CD4-positive, alpha-beta T cell (primary cell): ENCODE measurements at regions of chr15 and their contacts with region 1.

Region 1: GRCh38 chr15:88818920-88819319 is 15.7 kb downstream of the ACAN start:
- DNase-seq: no peak
- ATAC-seq: no peak
- H3K4me3 ChIP-seq: no peak overlapping the region
- H3K4me3 Mint-ChIP-seq: no peak overlapping the region
- H3K27ac ChIP-seq: no peak overlapping the region
- H3K27ac Mint-ChIP-seq: no peak overlapping the region
- H3K4me1 ChIP-seq: no peaks in the 10 kb centered on the region
- H3K4me1 Mint-ChIP-seq: no peaks in the 10 kb centered on the region
- H3K27me3 ChIP-seq: peaks cover 0 to 2% of the 10 kb centered on the region in 2 experiments
- H3K27me3 Mint-ChIP-seq: peaks cover 40% of the 10 kb centered on the region
- CTCF ChIP-seq: no peak

Region 2: DNA sequence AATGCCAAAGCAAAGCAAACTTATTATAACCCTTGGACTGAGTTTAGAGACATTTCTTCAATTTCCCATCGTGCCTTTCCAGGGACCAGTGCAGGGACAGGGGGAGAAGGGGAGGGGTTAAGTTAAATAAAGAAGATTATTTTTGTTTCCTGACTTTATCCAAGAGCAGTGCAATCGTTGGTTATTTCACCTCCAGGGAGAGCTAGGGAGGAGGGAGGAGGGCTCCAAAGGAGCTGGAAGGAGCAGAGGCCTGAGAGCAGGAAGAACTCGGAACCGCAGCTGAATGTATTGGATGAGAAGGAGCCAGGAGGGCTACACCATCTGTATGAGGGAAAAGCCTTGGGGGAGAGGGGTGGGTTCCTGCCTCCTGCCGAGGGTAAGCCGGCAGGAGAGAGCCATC is 55.8 kb after region 1 on chr15:
- CTCF ChIA-PET with region 1: no interaction called
- POLR2A ChIA-PET with region 1: no interaction called
- intact Hi-C with region 1: loop called in 1 of 2 experiments (anchors 5 kb)
- DNase-seq: no peak
- ATAC-seq: no peak
- H3K4me3 ChIP-seq: no peak overlapping the region
- H3K4me3 Mint-ChIP-seq: no peak overlapping the region
- H3K27ac ChIP-seq: no peak overlapping the region
- H3K27ac Mint-ChIP-seq: no peak overlapping the region
- H3K4me1 ChIP-seq: peaks cover 2% of the 10 kb centered on the region
- H3K4me1 Mint-ChIP-seq: no peaks in the 10 kb centered on the region
- H3K27me3 ChIP-seq: no peaks in the 10 kb centered on the region
- H3K27me3 Mint-ChIP-seq: no peaks in the 10 kb centered on the region
- CTCF ChIP-seq: no peak

Region 3: DNA sequence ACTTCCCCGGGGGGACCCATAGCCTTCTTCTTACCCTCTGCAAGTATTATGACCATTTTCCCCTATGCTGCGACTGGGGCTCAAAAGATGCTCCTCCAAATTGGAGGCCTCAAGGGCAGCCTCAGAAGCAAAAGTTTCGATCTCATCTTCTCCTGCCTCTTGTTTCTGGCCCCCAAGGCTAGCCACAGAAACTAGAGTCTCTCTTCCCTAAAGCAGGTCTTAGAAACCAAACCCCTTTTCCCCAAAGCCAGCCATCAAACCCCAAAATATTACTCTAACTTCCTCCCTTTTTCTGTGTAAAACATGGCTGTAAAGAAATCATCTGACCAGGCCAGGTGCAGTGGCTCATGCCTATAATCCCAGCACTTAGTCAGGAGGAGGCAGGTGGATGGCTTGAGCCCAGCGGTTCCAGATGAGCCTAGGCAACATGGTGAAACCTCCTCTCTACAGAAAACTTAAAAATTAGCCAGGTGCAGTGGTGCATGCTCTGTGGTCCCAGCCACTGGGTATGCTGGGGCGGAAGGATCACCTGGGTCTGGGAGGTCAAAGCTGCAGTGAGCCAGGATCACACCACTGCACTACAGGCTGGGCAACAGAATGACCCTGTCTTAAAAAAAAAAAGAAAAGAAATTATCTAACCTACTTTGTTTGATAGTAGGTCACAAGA is 130.9 kb after region 1 on chr15:
- CTCF ChIA-PET with region 1: no interaction called
- POLR2A ChIA-PET with region 1: no interaction called
- intact Hi-C with region 1: no loop called
- DNase-seq: no peak
- ATAC-seq: no peak
- H3K4me3 ChIP-seq: no peak overlapping the region
- H3K4me3 Mint-ChIP-seq: no peak overlapping the region
- H3K27ac ChIP-seq: no peak overlapping the region
- H3K27ac Mint-ChIP-seq: no peak overlapping the region
- H3K4me1 ChIP-seq: no peaks in the 10 kb centered on the region
- H3K4me1 Mint-ChIP-seq: no peaks in the 10 kb centered on the region
- H3K27me3 ChIP-seq: no peaks in the 10 kb centered on the region
- H3K27me3 Mint-ChIP-seq: no peaks in the 10 kb centered on the region
- CTCF ChIP-seq: no peak